ENCODE measurements at regions of chr2 and their contacts with region 1.

Region 1: DNA sequence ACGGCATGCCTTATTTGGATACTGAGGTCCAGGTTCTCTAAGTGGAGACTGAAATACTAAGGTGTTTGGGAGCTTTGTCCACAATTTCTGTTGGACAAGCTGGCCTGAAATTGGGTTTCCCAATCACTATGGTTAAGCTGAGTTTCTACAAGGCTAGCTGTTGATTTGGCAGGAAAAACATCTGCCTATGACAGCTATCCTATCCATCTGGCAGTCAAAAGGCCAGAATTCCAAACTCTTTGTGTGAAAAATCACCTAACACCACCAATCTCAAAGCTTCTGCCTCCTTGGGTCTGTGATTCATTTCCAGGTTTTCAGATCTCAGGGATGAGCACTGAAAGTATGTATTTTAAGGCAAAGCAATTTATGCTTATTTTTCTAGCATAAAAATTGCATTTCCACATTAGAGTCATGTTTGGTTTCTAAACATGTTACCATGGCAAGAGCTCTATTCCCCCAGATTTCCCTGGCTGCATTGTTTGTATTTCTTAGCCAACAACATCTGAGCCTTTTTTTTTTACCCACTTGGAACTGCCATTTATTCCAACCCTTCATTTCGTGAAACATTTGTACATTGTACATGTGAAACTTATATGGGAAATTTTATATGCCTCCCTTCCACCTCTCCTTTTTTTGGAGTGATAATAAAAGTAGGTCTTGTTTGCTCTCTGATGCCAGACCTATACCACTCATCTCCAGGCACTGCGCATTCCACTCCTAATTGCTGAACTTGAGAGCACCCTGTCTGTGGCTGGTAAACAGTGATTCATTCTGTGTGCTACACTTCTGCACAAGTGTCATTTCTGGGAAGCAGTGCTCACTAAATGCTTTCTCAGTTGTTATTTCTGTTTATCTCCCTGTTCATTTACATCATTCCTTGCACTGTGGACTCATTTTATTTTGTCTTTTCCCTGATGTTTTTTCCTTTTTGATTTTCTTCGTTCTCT is 15.9 kb upstream of the CCDC85A start:
- DNase-seq: no peak

Region 2: DNA sequence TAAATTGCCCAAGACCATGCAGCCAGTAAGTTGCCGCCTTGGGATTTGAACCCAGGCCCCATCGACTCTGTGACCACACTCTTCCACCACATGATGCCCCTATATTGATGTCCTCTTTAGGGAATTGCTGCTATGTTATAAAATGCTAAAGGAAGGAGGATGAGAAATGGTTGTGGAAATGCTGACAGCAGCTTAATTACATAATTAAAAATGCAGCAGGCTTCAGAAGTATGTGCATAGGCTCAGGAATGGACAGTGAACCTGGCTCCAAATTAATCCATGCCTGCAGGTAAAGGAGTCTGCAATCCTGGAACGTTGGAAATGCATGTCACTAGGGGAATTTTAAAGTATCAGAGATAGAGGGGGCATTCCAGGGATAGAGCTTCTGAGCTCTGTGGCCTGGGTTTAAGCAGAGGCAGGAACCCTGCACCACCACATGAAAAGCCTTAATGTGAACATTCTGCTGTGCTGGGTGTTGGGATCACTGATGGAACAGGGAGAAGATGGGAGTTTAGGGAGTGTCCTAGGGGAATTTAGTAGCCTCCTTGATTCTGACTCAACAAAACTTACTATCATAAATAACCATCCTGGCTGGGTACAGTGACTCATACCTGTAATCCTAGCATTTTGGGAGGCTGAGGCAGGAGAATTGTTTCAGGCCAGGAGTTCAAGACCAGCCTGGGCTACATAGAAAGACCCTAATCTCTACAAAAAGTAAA is 60.2 kb before region 1 on chr2:
- intact Hi-C with region 1: loop called in 1 of 2 experiments (anchors 2 kb)
- DNase-seq: no peak

Region 3: GRCh38 chr2:56118474-56118873 is 49.4 kb before region 1 on chr2:
- intact Hi-C with region 1: no loop called
- DNase-seq: no peak

Measured in posterior vena cava (tissue), 2 donors.